CD4-positive, alpha-beta T cell (primary cell): ENCODE measurements at regions of chr16 and their contacts with region 1.

Region 1: DNA sequence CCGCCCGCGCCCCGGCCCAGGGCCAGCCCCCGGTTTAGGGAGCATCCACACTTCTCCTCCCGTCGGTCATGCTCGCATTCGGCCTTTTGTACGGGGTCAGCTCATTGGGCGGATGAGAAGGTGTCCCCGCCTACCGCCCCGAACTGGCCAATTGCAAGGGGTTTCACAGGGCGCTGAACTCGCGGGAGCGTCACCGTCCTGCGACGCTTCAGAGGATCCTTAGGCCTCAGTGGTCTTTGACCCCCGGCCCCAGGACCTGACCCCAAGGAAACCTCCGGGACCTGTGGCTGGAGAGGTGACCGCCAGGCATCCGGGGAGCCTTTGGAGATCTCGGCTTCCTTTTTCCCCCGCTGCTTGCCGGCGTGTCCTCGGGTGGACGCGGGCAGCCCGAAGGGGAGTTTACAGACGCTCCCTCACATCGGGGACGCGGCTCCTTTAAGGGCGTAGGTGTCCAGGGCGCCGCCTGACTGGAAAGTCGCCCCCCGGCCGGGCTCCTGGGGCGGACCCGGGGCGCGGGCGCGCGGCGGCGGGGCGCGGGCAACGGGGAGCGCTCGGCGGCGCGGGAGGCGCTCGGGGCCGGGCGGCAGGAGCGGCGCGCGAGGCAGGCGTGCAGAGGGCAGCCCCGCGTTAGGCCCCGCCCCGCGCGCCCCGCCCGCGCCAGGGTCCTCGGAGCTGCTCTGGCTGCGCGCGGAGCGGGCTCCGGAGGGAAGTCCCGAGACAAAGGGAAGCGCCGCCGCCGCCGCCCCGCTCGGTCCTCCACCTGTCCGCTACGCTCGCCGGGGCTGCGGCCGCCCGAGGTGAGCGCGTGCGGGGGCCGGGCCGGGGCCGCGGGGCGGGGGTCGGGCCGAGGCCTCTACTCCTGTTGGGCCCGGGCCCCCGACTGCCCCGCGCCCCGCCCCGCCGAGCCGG is at the start of gene UBE2I:
- DNase-seq: peak; percentile 94 to 100 (median 97)
- ATAC-seq: peak; percentile 71
- H3K4me3 ChIP-seq: peak within 1 kb of the TSS; percentile 89
- H3K4me3 Mint-ChIP-seq: peak within 1 kb of the TSS; percentile 97
- H3K27ac ChIP-seq: peak within 1 kb of the TSS; percentile 96 to 99
- H3K27ac Mint-ChIP-seq: peak within 1 kb of the TSS; percentile 100
- H3K4me1 ChIP-seq: peaks cover 68% of the 10 kb centered on the region
- H3K4me1 Mint-ChIP-seq: peaks cover 38% of the 10 kb centered on the region
- H3K27me3 ChIP-seq: no peaks in the 10 kb centered on the region
- H3K27me3 Mint-ChIP-seq: no peaks in the 10 kb centered on the region
- CTCF ChIP-seq: no peak
- total RNA-seq, gene UBE2I: 247 to 252 TPM

Region 2: GRCh38 chr16:1331712-1332617 is 22.7 kb after region 1 on chr16:
- CTCF ChIA-PET with region 1: no interaction called
- POLR2A ChIA-PET with region 1: interaction called, 7 read pairs
- intact Hi-C with region 1: loop called in 1 of 2 experiments (anchors 2 kb)
- DNase-seq: peak in 8 of 14 experiments; percentile 28 to 77 (median 40)
- ATAC-seq: peak; percentile 28
- H3K4me3 ChIP-seq: peak overlapping the region; percentile 45
- H3K4me3 Mint-ChIP-seq: peak overlapping the region; percentile 85
- H3K27ac ChIP-seq: peak overlapping the region in 1 of 2 donors; percentile 44
- H3K27ac Mint-ChIP-seq: no peak overlapping the region
- H3K4me1 ChIP-seq: peaks cover 47% of the 10 kb centered on the region
- H3K4me1 Mint-ChIP-seq: peaks cover 12% of the 10 kb centered on the region
- H3K27me3 ChIP-seq: peaks cover 31 to 44% of the 10 kb centered on the region in 2 experiments
- H3K27me3 Mint-ChIP-seq: peaks cover 21% of the 10 kb centered on the region
- CTCF ChIP-seq: no peak

Region 3: GRCh38 chr16:1351582-1352362 is 42.5 kb after region 1 on chr16 and contains the starts of genes GNPTG and TSR3:
- CTCF ChIA-PET with region 1: no interaction called
- POLR2A ChIA-PET with region 1: interaction called, 5 read pairs
- intact Hi-C with region 1: loop called in 1 of 2 experiments (anchors 2 kb)
- DNase-seq: peak; percentile 70 to 95 (median 82)
- ATAC-seq: peak; percentile 84
- H3K4me3 ChIP-seq: peak within 1 kb of the TSS; percentile 87
- H3K4me3 Mint-ChIP-seq: peak within 1 kb of the TSS; percentile 90
- H3K27ac ChIP-seq: peak within 1 kb of the TSS in 1 of 2 donors; percentile 46
- H3K27ac Mint-ChIP-seq: peak within 1 kb of the TSS; percentile 89
- H3K4me1 ChIP-seq: peaks cover 54% of the 10 kb centered on the region
- H3K4me1 Mint-ChIP-seq: peaks cover 16% of the 10 kb centered on the region
- H3K27me3 ChIP-seq: no peaks in the 10 kb centered on the region
- H3K27me3 Mint-ChIP-seq: no peaks in the 10 kb centered on the region
- CTCF ChIP-seq: no peak
- total RNA-seq, gene GNPTG: 27.6 to 32.0 TPM
- total RNA-seq, gene TSR3: 19.9 to 21.4 TPM

Region 4: DNA sequence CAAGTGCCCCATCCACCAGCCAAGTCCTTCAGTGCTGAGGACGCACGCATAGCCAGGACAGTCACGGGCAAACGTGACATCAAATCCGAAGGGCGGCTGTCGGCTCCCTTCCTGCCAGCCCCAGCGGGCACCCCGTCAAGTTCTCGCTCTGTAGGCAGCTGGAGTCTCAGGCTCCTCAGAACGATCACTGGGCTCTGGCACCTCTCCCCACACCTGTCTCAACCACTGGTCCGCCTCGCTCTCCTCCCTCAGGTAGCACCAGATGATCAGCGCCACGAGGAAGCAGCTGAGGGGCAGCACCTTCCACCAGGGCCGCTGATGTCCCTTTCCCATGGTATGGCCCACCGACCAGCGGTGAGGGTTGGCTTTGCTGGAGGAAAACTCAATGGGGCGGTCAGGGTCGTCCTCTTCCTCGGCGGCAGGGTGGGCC is 110.9 kb after region 1 on chr16:
- CTCF ChIA-PET with region 1: no interaction called
- POLR2A ChIA-PET with region 1: interaction called, 14 read pairs
- intact Hi-C with region 1: loop called in 1 of 2 experiments (anchors 2 kb)
- DNase-seq: peak in 1 of 14 experiments; percentile 21
- ATAC-seq: no peak
- H3K4me3 ChIP-seq: peak overlapping the region; percentile 97
- H3K4me3 Mint-ChIP-seq: peak overlapping the region; percentile 89
- H3K27ac ChIP-seq: peak overlapping the region; percentile 82 to 93
- H3K27ac Mint-ChIP-seq: peak overlapping the region; percentile 98
- H3K4me1 ChIP-seq: peaks cover 32% of the 10 kb centered on the region
- H3K4me1 Mint-ChIP-seq: peaks cover 11% of the 10 kb centered on the region
- H3K27me3 ChIP-seq: no peaks in the 10 kb centered on the region
- H3K27me3 Mint-ChIP-seq: no peaks in the 10 kb centered on the region
- CTCF ChIP-seq: no peak

Region 5: GRCh38 chr16:1492923-1493745 is 183.9 kb after region 1 on chr16 and contains the start of gene TELO2:
- CTCF ChIA-PET with region 1: no interaction called
- POLR2A ChIA-PET with region 1: interaction called, 3 read pairs
- intact Hi-C with region 1: loop called in 1 of 2 experiments (anchors 5 kb)
- DNase-seq: peak; percentile 79 to 95 (median 88)
- ATAC-seq: peak; percentile 87
- H3K4me3 ChIP-seq: peak within 1 kb of the TSS; percentile 86
- H3K4me3 Mint-ChIP-seq: peak within 1 kb of the TSS; percentile 95
- H3K27ac ChIP-seq: peak within 1 kb of the TSS; percentile 84
- H3K27ac Mint-ChIP-seq: peak within 1 kb of the TSS; percentile 97
- H3K4me1 ChIP-seq: peaks cover 27% of the 10 kb centered on the region
- H3K4me1 Mint-ChIP-seq: peaks cover 10% of the 10 kb centered on the region
- H3K27me3 ChIP-seq: no peaks in the 10 kb centered on the region
- H3K27me3 Mint-ChIP-seq: no peaks in the 10 kb centered on the region
- CTCF ChIP-seq: peak; percentile 19
- total RNA-seq, gene TELO2: 29.7 to 30.8 TPM

Region 6: GRCh38 chr16:1705688-1706385 is 396.6 kb after region 1 on chr16 and contains the start of gene MAPK8IP3:
- CTCF ChIA-PET with region 1: no interaction called
- POLR2A ChIA-PET with region 1: interaction called, 8 read pairs
- intact Hi-C with region 1: loop called in 1 of 2 experiments (anchors 5 kb)
- DNase-seq: peak; percentile 84 to 99 (median 94)
- ATAC-seq: peak; percentile 75
- H3K4me3 ChIP-seq: peak within 1 kb of the TSS; percentile 98
- H3K4me3 Mint-ChIP-seq: peak within 1 kb of the TSS; percentile 96
- H3K27ac ChIP-seq: peak within 1 kb of the TSS; percentile 77 to 79
- H3K27ac Mint-ChIP-seq: peak within 1 kb of the TSS; percentile 97
- H3K4me1 ChIP-seq: peaks cover 35% of the 10 kb centered on the region
- H3K4me1 Mint-ChIP-seq: peaks cover 38% of the 10 kb centered on the region
- H3K27me3 ChIP-seq: no peaks in the 10 kb centered on the region
- H3K27me3 Mint-ChIP-seq: no peaks in the 10 kb centered on the region
- CTCF ChIP-seq: peak; percentile 70
- total RNA-seq, gene MAPK8IP3: 290 to 297 TPM